Kidney (tissue), 22 donors: ENCODE measurements at regions of chr16 and their contacts with region 1.

Region 1: GRCh38 chr16:11510178-11510973 is 76.3 kb downstream of the LITAF start:
- DNase-seq: no peak
- H3K4me3 ChIP-seq: no peak overlapping the region
- H3K27ac ChIP-seq: no peak overlapping the region
- H3K4me1 ChIP-seq: no peaks in the 10 kb centered on the region
- H3K27me3 ChIP-seq: no peaks in the 10 kb centered on the region
- CTCF ChIP-seq: no peak

Region 2: DNA sequence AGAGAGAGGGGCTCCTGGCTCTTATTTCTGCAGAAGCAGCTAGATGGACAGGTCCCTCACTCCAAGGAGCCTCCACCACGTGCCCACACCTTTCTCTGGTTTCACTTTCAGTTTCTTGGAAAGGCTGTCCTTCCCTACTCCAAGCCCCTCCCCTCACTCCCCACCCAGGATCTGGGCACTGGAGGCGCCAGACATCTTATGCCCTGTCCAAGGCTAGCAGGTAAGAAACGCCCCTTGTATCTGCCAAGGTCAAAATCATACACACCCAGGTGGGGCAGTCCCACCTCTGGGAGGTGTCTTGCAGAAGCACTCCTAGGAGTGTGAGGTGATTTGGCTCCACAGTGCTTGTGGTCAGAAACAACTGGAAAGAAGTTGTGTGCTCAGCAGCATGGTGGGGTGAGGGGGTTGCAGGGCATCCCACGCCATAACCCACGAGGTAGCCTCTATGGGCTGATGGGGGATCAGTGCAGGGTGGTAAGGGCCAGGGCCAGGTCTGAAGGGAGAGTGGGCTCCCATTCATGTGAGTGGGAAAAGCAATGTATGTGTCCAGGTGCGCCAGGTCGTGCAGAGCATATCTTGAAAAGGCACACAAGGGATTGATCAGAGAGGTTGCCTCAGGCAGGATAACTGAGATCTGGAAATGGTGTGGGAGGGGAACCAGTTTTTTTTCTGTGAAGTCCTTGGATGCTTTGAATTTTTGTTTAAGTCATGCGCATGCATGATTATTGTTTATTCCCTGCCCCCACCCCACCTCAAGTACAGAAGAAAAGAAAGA is 197.5 kb before region 1 on chr16:
- intact Hi-C with region 1: no loop called
- DNase-seq: peak in 4 of 5 donors; percentile 68 to 88 (median 86)
- H3K4me3 ChIP-seq: peak overlapping the region in 2 of 3 donors; percentile 12
- H3K27ac ChIP-seq: peak overlapping the region in 1 of 2 donors; percentile 52
- H3K4me1 ChIP-seq: peaks cover 0 to 24% (median 6%) of the 10 kb centered on the region in 3 donors
- H3K27me3 ChIP-seq: no peaks in the 10 kb centered on the region
- CTCF ChIP-seq: no peak

Region 3: DNA sequence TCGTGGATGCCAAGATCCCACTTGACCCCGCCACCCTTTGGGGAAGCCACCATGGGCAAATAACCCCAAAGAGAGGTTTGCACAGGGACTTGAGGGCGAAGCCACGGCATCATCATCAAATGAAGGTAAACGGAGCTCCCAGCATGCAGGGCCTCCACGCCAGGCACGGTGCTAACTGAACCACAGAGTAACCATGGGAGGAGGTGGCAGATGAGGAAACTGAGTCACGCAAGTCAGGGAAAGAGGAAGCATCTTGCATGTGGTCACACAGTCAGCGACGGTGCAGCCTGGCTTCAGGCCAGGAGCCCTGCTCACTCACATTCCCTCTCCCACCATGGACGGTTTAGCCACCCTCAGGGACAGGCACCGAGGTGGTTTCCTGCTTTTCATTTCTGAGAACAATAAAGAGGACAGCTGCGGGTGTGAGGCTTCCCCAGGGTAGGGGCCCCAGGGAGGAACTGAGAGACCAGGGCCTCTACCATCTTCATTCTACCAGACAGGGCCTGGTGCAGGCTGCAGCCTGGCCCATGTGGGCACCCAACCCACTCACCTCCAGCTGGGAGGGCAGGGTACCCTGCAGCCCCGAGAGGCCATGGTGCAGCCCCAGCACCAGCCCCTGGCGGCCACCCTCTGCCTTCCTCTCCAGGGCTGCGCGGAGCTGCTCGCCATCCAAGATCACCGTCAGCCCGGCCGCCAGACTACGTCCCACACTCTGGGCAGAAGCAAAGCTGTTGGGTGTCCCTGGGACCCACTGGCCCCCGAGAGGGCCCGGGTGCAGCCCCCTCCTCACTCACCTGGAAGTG is 86.9 kb before region 1 on chr16:
- intact Hi-C with region 1: loop called (anchors 10 kb)
- DNase-seq: no peak
- H3K4me3 ChIP-seq: no peak overlapping the region
- H3K27ac ChIP-seq: no peak overlapping the region
- H3K4me1 ChIP-seq: no peaks in the 10 kb centered on the region
- H3K27me3 ChIP-seq: no peaks in the 10 kb centered on the region
- CTCF ChIP-seq: no peak

Region 4: GRCh38 chr16:11435576-11435975 is 74.8 kb before region 1 on chr16:
- intact Hi-C with region 1: no loop called
- DNase-seq: no peak
- H3K4me3 ChIP-seq: no peak overlapping the region
- H3K27ac ChIP-seq: no peak overlapping the region
- H3K4me1 ChIP-seq: no peaks in the 10 kb centered on the region
- H3K27me3 ChIP-seq: no peaks in the 10 kb centered on the region
- CTCF ChIP-seq: no peak